Left lung (tissue), 14 donors: ENCODE measurements at regions of chr19 and their contacts with region 1.

Region 1: GRCh38 chr19:16235811-16236652 is 38.3 kb downstream of the AP1M1 start:
- DNase-seq: peak in 2 of 4 donors; percentile 19 to 42
- ATAC-seq: no peak
- H3K4me3 ChIP-seq: no peak overlapping the region
- H3K27ac ChIP-seq: peak overlapping the region in 1 of 2 donors; percentile 73
- H3K4me1 ChIP-seq: peaks cover 0 to 30% of the 10 kb centered on the region in 2 donors
- H3K27me3 ChIP-seq: no peaks in the 10 kb centered on the region
- CTCF ChIP-seq: no peak

Region 2: DNA sequence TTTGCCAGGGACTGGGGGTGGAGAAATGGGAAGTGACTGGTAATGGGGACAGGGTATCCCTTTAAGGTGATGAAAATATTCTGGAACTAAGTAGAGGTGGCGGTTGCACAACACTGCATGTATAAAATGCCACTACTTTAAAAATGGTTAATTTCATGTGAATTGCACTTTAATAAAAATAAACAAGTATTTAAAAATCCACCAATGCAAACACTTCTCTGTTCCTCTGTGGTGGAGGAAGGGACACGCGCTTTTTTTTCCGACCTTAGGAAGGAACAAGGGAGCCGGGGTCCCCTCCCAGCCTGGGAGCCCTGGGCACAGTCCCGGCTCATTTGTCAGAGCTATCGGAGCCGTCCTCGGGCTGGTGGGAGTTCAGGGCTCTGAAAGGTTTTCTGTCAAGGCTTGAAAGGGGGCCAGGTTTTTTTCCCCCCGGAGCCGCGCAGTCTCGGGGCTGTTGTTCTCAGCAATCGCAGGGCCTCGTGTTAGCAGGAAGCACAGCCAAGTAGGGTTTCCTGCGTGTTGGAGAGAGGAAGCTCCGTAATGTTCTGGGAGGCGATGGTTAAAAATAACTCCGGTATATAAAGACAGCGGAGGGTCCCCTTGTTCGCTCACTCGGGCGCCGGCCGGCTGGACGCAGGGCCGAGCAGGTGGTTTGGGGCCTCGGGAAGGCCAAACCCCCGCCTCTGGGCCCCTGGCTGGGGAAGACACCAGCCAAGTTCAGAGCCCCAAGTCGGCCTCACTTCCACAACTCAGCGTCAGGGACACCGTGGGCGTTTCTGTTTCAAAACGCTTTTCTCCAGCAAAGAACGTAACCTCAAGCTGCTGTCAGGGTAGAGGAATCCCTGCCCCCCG is 47.4 kb after region 1 on chr19:
- intact Hi-C with region 1: no loop called
- DNase-seq: peak; percentile 76 to 85 (median 81)
- ATAC-seq: peak; percentile 72
- H3K4me3 ChIP-seq: peak overlapping the region; percentile 7 to 26
- H3K27ac ChIP-seq: peak overlapping the region; percentile 88 to 96
- H3K4me1 ChIP-seq: peaks cover 25 to 80% of the 10 kb centered on the region in 2 donors
- H3K27me3 ChIP-seq: no peaks in the 10 kb centered on the region
- CTCF ChIP-seq: no peak

Region 3: DNA sequence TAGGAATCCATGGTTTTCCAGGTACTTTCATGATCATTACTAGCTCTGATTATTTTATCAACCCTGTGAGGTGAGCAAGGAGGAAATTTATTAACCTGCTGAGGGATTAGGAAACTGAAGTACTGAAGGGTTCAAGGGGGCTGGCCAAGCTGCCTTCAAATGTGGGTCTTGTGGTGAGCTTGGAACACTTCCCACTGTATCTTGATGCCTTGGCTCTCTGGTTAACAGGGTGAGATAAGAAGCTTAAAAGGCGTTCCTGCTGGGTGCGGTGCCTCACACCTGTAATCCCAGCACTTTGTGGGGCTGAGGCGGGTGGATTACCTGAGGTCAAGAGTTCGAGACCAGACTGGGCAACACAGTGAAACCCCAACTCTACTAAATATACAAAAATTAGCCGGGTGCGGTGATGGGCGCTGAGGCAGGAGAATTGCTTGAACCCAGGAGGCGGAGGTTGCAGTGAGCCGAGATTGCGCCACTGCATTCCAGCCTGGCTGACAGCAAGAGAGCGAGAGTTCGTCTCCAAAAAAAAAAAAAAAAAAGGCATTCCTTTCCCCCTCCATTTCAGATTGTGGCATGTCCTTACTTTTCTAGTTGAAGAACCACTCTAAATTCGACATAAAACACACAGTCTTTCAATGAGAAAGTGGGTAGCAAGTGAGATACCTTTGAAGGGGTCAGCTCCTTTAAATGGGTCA is 158.8 kb after region 1 on chr19:
- intact Hi-C with region 1: loop called in 1 of 2 experiments (anchors 5 kb)
- DNase-seq: peak in 1 of 4 donors; percentile 33
- ATAC-seq: peak; percentile 36
- H3K4me3 ChIP-seq: no peak overlapping the region
- H3K27ac ChIP-seq: peak overlapping the region in 1 of 2 donors; percentile 39
- H3K4me1 ChIP-seq: peaks cover 7 to 19% of the 10 kb centered on the region in 2 donors
- H3K27me3 ChIP-seq: no peaks in the 10 kb centered on the region
- CTCF ChIP-seq: no peak